AG04449 (cell line): ENCODE measurements at regions of chr10 and their contacts with region 1.

Region 1: GRCh38 chr10:119207367-119207668 is at the start of gene GRK5:
- DNase-seq: peak; percentile 74
- H3K4me3 ChIP-seq: peak within 1 kb of the TSS; percentile 79
- CTCF ChIP-seq: no peak

Region 2: GRCh38 chr10:119227825-119228224 is 20.5 kb after region 1 on chr10:
- CTCF ChIA-PET with region 1: interaction called, 80 read pairs
- POLR2A ChIA-PET with region 1: no interaction called
- DNase-seq: no peak
- H3K4me3 ChIP-seq: no peak overlapping the region
- CTCF ChIP-seq: no peak

Region 3: DNA sequence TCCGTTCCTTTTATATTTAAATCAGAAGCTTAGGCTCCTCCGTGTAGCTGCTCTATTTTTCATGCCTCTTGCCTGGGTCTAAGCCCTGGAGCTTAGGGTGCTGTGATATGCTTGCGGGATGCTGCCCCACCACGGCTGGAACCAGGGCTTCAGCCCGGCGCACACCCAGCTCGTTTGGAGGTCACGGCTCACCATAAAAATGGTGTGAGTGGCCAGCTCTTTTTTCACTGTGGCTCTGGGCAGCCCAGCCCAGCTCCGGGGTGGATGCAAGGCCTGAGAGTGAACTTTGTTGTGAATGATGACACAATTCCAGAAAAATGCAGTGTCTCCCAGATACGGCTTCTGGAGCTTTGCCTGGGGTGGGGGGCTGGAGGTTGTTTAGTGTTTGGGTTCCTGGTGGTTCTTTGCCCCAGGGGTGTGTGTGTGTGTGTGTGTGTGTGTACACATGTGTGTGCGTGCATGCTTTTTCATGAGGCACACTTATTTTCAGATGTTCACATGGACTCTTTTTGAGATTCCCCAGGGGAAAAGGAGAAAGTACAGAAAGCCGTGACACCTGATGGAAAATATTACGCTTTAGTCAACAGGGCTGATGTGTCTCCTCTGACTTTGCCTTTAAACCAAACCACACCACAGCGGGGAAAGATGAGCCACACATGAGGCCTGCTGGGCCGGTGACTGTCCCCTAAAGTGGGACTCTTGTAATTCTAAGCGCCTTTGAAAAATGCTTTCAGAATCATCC is 46.3 kb after region 1 on chr10:
- CTCF ChIA-PET with region 1: interaction called, 24 read pairs
- POLR2A ChIA-PET with region 1: interaction called, 6 read pairs
- DNase-seq: peak; percentile 67
- H3K4me3 ChIP-seq: no peak overlapping the region
- CTCF ChIP-seq: peak; percentile 22

Region 4: GRCh38 chr10:119416855-119417254 is 209.5 kb after region 1 on chr10:
- CTCF ChIA-PET with region 1: interaction called, 354 read pairs
- POLR2A ChIA-PET with region 1: no interaction called
- DNase-seq: no peak
- H3K4me3 ChIP-seq: no peak overlapping the region
- CTCF ChIP-seq: peak; percentile 84

Region 5: GRCh38 chr10:119494236-119495060 is 287.1 kb after region 1 on chr10:
- CTCF ChIA-PET with region 1: interaction called, 56 read pairs
- POLR2A ChIA-PET with region 1: no interaction called
- DNase-seq: no peak
- H3K4me3 ChIP-seq: no peak overlapping the region
- CTCF ChIP-seq: no peak